ENCODE measurements at regions of chr1 and their contacts with region 1.

Region 1: DNA sequence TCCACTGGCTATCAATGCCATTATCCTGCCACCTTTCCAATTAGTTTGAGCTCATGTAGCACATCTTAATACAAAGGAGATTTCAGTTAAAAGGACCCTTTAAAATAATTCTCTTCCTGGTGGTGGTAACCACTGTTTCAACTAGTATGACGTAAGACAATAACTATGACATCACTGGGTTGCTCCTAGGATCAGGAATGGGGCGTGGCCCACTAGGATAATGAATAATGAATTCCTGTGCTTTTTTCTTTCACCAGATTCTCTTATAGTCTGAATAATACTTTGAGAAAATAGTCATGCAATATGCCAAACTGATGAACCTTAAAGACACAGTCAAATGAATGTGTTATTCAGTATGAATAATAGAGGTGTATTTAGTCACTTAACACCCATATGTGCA is 10.6 kb upstream of the KIFAP3 start:
- DNase-seq: no peak
- H3K4me3 ChIP-seq: no peak overlapping the region
- H3K27ac ChIP-seq: no peak overlapping the region
- H3K4me1 ChIP-seq: no peaks in the 10 kb centered on the region
- H3K27me3 ChIP-seq: no peaks in the 10 kb centered on the region
- CTCF ChIP-seq: no peak
- POLR2A ChIP-seq: no peak

Region 2: DNA sequence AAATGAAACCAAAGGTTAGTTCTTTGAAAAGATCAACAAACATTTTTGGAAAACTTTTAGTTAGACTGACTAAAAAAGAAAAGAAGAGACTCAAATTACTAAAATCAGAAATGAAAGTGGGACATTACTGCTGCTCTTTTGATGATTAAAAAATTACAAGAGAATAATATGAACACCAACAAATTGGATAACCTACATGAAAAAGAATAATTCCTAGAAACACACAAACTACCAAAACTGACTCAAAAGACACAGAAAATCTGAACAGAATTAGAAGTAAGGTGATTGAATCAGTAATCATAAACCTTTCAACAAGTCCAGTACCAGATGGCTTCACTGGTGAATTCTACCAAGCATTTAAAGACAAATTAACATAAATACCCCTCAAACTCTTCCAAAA is 16.2 kb before region 1 on chr1:
- intact Hi-C with region 1: loop called (anchors 2 kb)
- DNase-seq: no peak
- H3K4me3 ChIP-seq: no peak overlapping the region
- H3K27ac ChIP-seq: no peak overlapping the region
- H3K4me1 ChIP-seq: no peaks in the 10 kb centered on the region
- H3K27me3 ChIP-seq: no peaks in the 10 kb centered on the region
- CTCF ChIP-seq: no peak
- POLR2A ChIP-seq: no peak